ENCODE measurements at regions of chr22 and their contacts with region 1.

Region 1: DNA sequence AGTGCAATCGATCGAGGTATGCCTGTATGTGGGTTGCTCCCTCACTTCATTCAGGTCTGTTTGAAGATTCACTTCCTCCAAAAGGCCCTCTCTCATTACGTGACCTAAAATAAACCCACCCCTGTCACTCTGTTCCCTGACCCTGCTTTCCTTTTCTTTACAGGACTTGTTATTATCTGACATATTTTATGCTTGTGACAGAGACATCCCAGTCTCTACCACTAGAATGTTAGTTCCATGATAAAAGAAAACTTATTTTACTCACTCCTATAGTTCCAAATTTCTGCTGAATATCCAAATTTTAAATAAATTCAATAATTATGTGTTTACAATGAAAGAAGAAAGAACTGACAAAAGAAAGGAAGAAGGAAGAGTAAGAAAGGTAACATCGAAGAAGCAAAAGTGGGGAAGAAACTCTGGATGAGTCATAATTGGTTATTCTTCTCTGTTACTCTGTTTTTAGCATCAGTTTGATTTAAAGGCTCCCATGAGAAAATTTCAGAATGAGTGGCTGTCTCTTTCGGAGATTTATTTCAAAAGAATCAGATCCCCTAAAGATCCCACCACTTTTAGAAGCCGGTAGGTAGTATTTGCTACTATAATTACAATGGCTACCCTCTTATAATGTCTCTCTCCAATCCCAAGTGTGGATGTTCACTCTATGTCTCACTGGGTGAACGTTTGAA is 33.5 kb downstream of the ENTHD1 start:
- DNase-seq: no peak
- H3K4me3 ChIP-seq: no peak overlapping the region
- CTCF ChIP-seq: no peak

Region 2: DNA sequence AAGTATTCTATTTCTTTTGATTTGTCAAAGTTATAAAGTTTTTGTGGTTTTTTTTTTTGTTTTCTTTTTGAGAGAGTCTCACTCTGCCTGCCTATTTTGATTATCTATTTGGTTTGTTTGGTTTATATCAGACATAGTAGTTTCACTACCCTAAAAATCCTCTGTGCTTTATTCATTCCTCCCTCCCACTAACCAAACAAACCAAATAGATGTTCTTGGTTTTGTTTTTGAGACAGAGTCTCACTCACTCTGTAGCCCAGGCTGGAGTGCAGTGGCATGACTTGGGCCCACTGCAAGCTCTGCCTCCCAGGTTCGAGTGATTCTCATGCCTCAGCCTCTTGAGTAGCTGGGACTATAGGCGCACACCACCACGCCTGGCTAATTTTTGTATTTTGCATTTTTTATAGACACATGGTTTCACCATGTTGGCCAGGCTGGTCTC is 34.4 kb before region 1 on chr22:
- in situ Hi-C with region 1: no loop called
- DNase-seq: no peak
- H3K4me3 ChIP-seq: no peak overlapping the region
- CTCF ChIP-seq: no peak

Region 3: DNA sequence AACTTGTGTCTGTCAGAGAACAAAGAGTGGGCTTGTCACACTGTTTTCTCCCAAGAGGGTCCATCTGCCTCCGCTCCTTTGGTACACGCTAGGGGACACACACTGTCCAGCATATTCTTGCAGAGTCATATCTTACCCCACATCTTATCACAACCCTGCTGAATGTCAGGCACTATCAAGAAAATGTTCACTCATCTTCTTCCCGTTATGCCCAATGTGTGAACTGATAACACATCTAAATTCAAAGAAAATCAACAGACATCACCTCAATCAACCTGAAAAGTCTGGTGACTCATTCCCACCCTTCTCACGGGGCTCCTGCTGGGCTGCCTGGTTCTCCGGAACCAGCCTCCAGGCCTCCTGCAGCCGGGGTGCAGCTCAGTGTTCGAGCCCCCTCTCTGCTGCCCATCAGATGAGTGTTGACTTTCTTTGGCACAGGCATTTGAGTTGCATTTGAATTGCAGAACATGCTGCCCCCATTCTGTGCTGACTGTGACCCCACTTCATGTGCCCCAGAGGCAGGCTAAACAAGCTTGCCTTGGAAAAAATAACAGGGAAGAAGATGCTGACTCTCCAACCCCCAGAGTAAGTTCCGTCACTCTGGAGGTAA is 60.2 kb after region 1 on chr22:
- in situ Hi-C with region 1: loop called (anchors 5 kb)
- DNase-seq: no peak
- H3K4me3 ChIP-seq: no peak overlapping the region
- CTCF ChIP-seq: no peak

Region 4: GRCh38 chr22:40009292-40009769 is 149.3 kb after region 1 on chr22:
- in situ Hi-C with region 1: loop called (anchors 5 kb)
- DNase-seq: no peak
- H3K4me3 ChIP-seq: no peak overlapping the region
- CTCF ChIP-seq: no peak

Measured in astrocyte of the cerebellum (primary cell).